Psoas muscle (tissue), 8 donors: ENCODE measurements at regions of chr2 and their contacts with region 1.

Region 1: GRCh38 chr2:191691016-191691735 is 13.2 kb downstream of the NABP1 start:
- DNase-seq: no peak
- ATAC-seq: peak; percentile 48 to 94 (median 77)
- H3K4me3 ChIP-seq: no peak overlapping the region
- H3K27ac ChIP-seq: no peak overlapping the region
- H3K4me1 ChIP-seq: peaks cover 3% of the 10 kb centered on the region
- H3K27me3 ChIP-seq: no peaks in the 10 kb centered on the region
- CTCF ChIP-seq: peak; percentile 67

Region 2: GRCh38 chr2:191566344-191566743 is 124.8 kb before region 1 on chr2:
- intact Hi-C with region 1: loop called (anchors 2 kb)
- DNase-seq: peak in 1 of 2 donors; percentile 26
- ATAC-seq: peak; percentile 37 to 82 (median 72)
- H3K4me3 ChIP-seq: no peak overlapping the region
- H3K27ac ChIP-seq: no peak overlapping the region
- H3K4me1 ChIP-seq: no peaks in the 10 kb centered on the region
- H3K27me3 ChIP-seq: no peaks in the 10 kb centered on the region
- CTCF ChIP-seq: peak; percentile 75